Activated CD4-positive, alpha-beta T cell treated with anti-CD3 and anti-CD28 coated beads, Interleukin-2, amount 10 ng/mL, durations not matched to agents 24 days and 14 days (primary cell): ENCODE measurements at regions of chr6 and their contacts with region 1.

Region 1: DNA sequence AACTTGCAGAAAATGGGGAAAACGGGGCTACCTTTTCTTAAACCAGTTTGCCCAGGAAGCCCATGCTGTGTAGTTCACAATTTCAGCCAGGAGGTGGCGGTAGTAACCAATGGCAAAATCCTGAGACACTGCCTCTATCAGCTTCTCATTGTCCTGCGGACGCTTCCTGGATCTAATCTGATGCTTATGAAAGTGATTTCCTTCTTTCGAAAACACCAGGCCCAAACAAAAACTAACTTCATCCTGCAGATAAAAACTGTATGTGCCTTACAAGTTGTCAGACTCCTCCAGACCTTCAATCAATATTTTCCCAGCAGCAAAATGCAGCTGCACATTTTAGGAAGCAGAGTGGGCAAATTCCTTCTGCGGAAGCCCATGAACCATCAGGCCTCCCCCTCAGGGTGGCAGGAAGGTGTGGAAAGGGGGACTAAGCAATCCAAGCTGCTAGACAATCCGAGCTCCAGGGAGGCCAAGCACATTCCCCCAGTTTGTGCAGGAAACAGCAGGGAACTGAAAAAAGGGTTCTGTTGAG is 88.5 kb downstream of the LY86 start:
- DNase-seq: peak; percentile 95
- H3K4me3 Mint-ChIP-seq: peak overlapping the region; percentile 8
- H3K27ac Mint-ChIP-seq: no peak overlapping the region
- H3K4me1 Mint-ChIP-seq: peaks cover 29% of the 10 kb centered on the region
- H3K27me3 Mint-ChIP-seq: peaks cover 2% of the 10 kb centered on the region

Region 2: GRCh38 chr6:6712258-6712999 is 35.5 kb after region 1 on chr6:
- intact Hi-C with region 1: loop called (anchors 5 kb)
- DNase-seq: no peak
- H3K4me3 Mint-ChIP-seq: peak overlapping the region; percentile 69
- H3K27ac Mint-ChIP-seq: peak overlapping the region; percentile 67
- H3K4me1 Mint-ChIP-seq: peaks cover 32% of the 10 kb centered on the region
- H3K27me3 Mint-ChIP-seq: peaks cover 23% of the 10 kb centered on the region